AG04450 (cell line): ENCODE measurements at regions of chr2 and their contacts with region 1.

Region 1: DNA sequence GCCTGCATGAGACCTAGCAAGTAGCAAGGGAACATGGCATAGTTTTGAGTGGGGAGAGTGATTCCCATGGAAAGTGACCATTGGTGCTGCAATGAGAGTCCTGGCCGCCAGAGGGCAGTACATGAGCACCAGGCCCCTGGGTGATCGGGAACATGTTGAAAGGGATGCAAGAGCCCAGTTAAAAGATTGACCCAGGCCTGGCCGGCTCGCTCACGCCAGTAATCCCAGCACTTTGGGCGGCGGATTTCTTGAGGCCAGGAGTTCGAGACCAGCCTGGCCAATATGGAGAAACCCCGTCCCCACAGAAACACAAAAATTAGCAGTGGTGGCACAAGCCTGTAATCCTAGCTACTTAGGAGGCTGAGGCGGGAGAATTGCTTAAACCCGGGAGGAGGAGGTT is 22.2 kb downstream of the FAP start:
- DNase-seq: no peak
- H3K4me3 ChIP-seq: no peak overlapping the region
- H3K27ac ChIP-seq: no peak overlapping the region
- H3K27me3 ChIP-seq: no peaks in the 10 kb centered on the region
- CTCF ChIP-seq: peak; percentile 88

Region 2: GRCh38 chr2:162153608-162154224 is 67.3 kb before region 1 on chr2:
- CTCF ChIA-PET with region 1: interaction called, 10 read pairs
- POLR2A ChIA-PET with region 1: no interaction called
- DNase-seq: no peak
- H3K4me3 ChIP-seq: no peak overlapping the region
- H3K27ac ChIP-seq: no peak overlapping the region
- H3K27me3 ChIP-seq: no peaks in the 10 kb centered on the region
- CTCF ChIP-seq: peak; percentile 71

Region 3: GRCh38 chr2:162196638-162197037 is 24.4 kb before region 1 on chr2:
- CTCF ChIA-PET with region 1: interaction called, 13 read pairs
- POLR2A ChIA-PET with region 1: no interaction called
- DNase-seq: no peak
- H3K4me3 ChIP-seq: no peak overlapping the region
- H3K27ac ChIP-seq: peak overlapping the region; percentile 87
- H3K27me3 ChIP-seq: no peaks in the 10 kb centered on the region
- CTCF ChIP-seq: no peak

Region 4: DNA sequence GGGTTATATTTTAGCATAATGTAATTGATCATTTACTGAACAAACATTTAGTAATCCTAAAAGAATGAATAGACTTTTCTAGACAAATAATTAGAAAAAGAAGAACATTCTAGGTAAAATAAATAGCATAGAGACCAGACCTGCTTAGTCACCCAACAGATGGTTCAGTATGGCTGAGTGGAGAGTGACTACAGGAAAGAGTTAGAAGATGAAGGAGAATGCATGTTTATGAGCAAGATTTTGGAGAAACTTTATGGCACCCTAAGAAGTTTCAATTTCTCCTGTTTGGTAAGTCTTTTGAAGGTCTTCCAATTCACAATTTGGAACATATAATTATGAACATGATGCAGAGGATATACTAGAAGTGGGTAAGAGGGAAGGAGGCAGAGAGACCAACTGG is 10.7 kb before region 1 on chr2:
- CTCF ChIA-PET with region 1: interaction called, 19 read pairs
- POLR2A ChIA-PET with region 1: no interaction called
- DNase-seq: peak; percentile 44
- H3K4me3 ChIP-seq: no peak overlapping the region
- H3K27ac ChIP-seq: peak overlapping the region; percentile 0
- H3K27me3 ChIP-seq: no peaks in the 10 kb centered on the region
- CTCF ChIP-seq: no peak

Region 5: GRCh38 chr2:162233197-162233596 is 12.1 kb after region 1 on chr2:
- CTCF ChIA-PET with region 1: interaction called, 37 read pairs
- POLR2A ChIA-PET with region 1: interaction called, 3 read pairs
- DNase-seq: no peak
- H3K4me3 ChIP-seq: peak overlapping the region; percentile 12; the same call in 1 of the 2 replicates
- H3K27ac ChIP-seq: no peak overlapping the region
- H3K27me3 ChIP-seq: no peaks in the 10 kb centered on the region
- CTCF ChIP-seq: no peak

Region 6: GRCh38 chr2:162293122-162293786 is 72.2 kb after region 1 on chr2:
- CTCF ChIA-PET with region 1: interaction called, 222 read pairs
- POLR2A ChIA-PET with region 1: interaction called, 3 read pairs
- DNase-seq: no peak
- H3K4me3 ChIP-seq: no peak overlapping the region
- H3K27ac ChIP-seq: no peak overlapping the region
- H3K27me3 ChIP-seq: no peaks in the 10 kb centered on the region
- CTCF ChIP-seq: no peak